Naive thymus-derived CD4-positive, alpha-beta T cell (primary cell): ENCODE measurements at regions of chr13 and their contacts with region 1.

Region 1: DNA sequence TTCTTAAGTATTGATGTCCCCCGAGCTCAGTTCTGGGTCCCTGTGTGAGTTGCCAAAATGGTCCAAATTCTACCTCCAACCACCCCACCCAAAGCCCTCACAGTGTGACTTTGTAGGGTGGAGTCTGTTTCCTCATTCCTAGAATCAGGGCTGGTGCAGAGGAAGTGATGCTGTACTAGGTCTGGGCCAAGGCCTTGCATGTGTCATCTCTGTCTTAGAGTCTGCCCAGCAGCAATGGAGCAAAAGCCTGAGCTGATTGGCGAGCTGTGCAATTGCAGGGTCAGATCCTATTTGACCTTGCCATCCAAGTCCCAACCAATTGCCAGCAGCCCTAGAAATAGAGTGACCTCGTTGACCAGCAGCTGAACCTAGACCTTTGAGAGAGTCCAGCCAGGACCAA is 97.0 kb upstream of the ANKRD10 start:
- DNase-seq: no peak
- ATAC-seq: peak; percentile 38
- H3K4me3 ChIP-seq: no peak overlapping the region
- H3K4me3 Mint-ChIP-seq: peak overlapping the region in 1 of 10 donors; percentile 72
- H3K27ac ChIP-seq: no peak overlapping the region
- H3K27ac Mint-ChIP-seq: peak overlapping the region in 1 of 9 donors; percentile 89
- H3K4me1 ChIP-seq: no peaks in the 10 kb centered on the region
- H3K4me1 Mint-ChIP-seq: peaks cover 0 to 32% (median 0%) of the 10 kb centered on the region in 7 donors
- H3K27me3 ChIP-seq: peaks cover 0 to 4% of the 10 kb centered on the region in 2 donors
- H3K27me3 Mint-ChIP-seq: peaks cover 6 to 18% (median 14%) of the 10 kb centered on the region in 5 donors

Region 2: GRCh38 chr13:110965038-110965754 is 46.7 kb before region 1 on chr13:
- CTCF ChIA-PET with region 1: no interaction called
- POLR2A ChIA-PET with region 1: no interaction called
- intact Hi-C with region 1: loop called in 1 of 2 experiments (anchors 2 kb)
- DNase-seq: no peak
- ATAC-seq: peak; percentile 26
- H3K4me3 ChIP-seq: no peak overlapping the region
- H3K4me3 Mint-ChIP-seq: peak overlapping the region in 1 of 10 donors; percentile 37
- H3K27ac ChIP-seq: no peak overlapping the region
- H3K27ac Mint-ChIP-seq: peak overlapping the region in 1 of 9 donors; percentile 79
- H3K4me1 ChIP-seq: no peaks in the 10 kb centered on the region
- H3K4me1 Mint-ChIP-seq: peaks cover 0 to 16% (median 0%) of the 10 kb centered on the region in 7 donors
- H3K27me3 ChIP-seq: no peaks in the 10 kb centered on the region
- H3K27me3 Mint-ChIP-seq: peaks cover 0 to 18% (median 8%) of the 10 kb centered on the region in 5 donors